ENCODE measurements at regions of chr3 and their contacts with region 1.

Region 1: GRCh38 chr3:196842567-196843434 is 24.9 kb upstream of the SENP5 start:
- DNase-seq: no peak
- H3K4me3 ChIP-seq: no peak overlapping the region
- H3K27ac ChIP-seq: no peak overlapping the region
- H3K4me1 ChIP-seq: no peaks in the 10 kb centered on the region
- H3K27me3 ChIP-seq: no peaks in the 10 kb centered on the region
- CTCF ChIP-seq: no peak
- POLR2A ChIP-seq: no peak

Region 2: DNA sequence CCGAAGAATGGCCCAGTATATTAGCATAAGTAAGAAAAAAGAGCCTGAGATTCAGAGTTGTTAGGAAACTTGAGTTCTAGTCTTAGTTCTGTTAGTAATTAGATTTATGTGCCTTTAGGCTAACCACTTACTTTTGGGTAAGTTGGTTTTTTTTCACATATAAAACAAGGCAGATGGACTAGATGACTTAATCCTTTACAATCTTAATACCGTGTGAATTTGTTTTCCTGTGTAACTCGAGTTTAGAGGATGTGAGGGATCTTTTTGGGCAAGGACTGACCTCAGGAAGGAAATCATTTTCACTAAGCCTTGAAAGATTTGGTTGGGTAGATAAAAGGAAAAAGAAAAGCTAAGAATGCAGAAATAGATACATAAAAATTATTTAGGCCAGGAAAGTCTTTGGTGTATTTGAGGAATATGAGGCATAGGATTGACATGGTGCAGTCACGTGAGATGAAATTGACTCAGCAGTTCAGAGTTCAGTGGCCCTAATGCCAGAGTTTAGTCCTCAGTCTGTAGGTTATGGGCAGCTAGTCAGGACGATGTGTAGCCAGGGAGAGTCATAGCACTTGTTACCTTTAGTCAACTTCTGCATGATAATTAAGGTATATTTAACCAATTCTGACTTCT is 68.5 kb before region 1 on chr3:
- intact Hi-C with region 1: no loop called
- DNase-seq: no peak
- H3K4me3 ChIP-seq: no peak overlapping the region
- H3K27ac ChIP-seq: no peak overlapping the region
- H3K4me1 ChIP-seq: peaks cover 0 to 3% of the 10 kb centered on the region in 2 donors
- H3K27me3 ChIP-seq: no peaks in the 10 kb centered on the region
- CTCF ChIP-seq: no peak
- POLR2A ChIP-seq: no peak

Region 3: DNA sequence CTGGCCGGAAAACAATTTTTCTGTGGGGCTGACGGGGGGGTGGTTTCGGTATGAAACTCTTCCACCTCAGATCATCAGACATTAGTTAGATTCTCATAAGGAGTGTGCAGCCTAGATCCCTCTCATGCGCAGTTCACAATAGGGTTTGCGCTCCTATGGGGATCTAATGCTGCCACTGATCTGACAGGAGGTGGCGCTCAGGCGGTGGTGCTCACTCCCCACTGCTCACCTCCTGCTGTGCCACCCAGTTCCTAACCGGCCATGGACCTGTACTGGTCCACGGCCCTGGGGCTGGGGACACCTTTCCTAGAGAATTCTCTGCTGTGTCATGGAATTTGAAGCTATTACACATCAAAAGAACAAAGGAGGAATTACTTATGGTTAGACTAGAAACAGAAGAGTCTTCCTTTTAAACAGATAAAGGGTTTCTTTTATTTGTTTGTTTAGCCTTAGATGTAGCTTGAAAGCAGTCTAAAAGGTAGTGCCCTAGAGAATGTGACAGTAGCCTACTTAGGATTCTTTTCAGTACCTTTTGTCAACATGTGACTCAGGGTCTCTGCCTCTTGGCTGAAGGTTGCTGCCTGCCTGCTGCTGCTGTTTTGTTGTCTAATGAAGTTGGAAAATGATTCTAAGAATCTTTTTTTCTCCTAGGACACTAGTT is 52.9 kb before region 1 on chr3:
- intact Hi-C with region 1: no loop called
- DNase-seq: no peak
- H3K4me3 ChIP-seq: no peak overlapping the region
- H3K27ac ChIP-seq: no peak overlapping the region
- H3K4me1 ChIP-seq: no peaks in the 10 kb centered on the region
- H3K27me3 ChIP-seq: no peaks in the 10 kb centered on the region
- CTCF ChIP-seq: no peak
- POLR2A ChIP-seq: no peak

Region 4: GRCh38 chr3:196932600-196932999 is 89.8 kb after region 1 on chr3:
- intact Hi-C with region 1: no loop called
- DNase-seq: no peak
- H3K4me3 ChIP-seq: no peak overlapping the region
- H3K27ac ChIP-seq: no peak overlapping the region
- H3K4me1 ChIP-seq: no peaks in the 10 kb centered on the region
- H3K27me3 ChIP-seq: no peaks in the 10 kb centered on the region
- CTCF ChIP-seq: no peak
- POLR2A ChIP-seq: no peak

Region 5: DNA sequence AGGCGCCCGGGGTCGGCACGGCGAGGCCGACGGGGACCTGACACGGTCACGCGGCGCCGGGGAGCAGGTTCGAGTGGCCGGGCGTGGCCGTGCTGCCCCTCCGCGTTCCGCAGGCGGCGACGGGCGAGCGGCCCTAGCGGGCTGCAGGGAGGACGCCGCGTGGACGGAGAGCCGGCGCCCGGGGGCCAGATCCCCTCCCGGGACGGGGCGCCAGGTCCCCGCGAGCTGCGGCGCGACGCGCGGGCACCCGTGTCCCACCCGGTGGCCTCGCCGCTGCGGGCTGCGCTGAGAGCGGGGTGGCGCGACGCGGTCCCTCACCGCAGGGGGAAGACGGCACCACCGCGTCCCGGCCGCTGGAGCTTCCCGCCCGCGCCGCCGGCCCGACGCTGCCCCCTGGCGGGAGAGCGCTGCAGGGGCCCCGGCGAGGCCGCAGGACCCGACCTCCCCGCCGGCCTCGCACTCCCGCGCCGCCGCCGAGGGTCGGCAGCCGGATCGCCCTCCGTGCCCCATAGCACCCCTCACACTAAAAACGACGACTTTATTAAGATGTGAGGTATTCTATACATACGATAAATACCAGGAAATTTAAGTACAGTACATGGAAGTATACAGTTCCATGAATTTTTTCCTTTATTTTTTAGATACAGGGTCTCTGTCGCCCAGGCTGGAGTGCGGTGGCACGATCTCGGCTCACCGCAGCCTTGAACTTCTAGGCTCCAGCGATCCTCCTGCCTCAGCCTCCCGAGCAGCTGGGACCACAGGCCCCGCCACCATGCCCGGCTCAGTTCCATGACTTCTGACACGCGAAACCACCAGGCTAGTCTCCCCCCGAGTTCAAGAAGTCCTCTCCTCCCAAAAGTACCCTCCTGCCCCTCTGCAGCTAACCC is 127.1 kb after region 1 on chr3:
- intact Hi-C with region 1: loop called (anchors 10 kb)
- DNase-seq: peak in 1 of 2 donors; percentile 61
- H3K4me3 ChIP-seq: peak overlapping the region; percentile 49 to 53
- H3K27ac ChIP-seq: peak overlapping the region; percentile 11 to 67
- H3K4me1 ChIP-seq: peaks cover 0 to 3% of the 10 kb centered on the region in 2 donors
- H3K27me3 ChIP-seq: no peaks in the 10 kb centered on the region
- CTCF ChIP-seq: peak; percentile 56 to 94 (median 93)
- POLR2A ChIP-seq: peak in 1 of 2 donors; percentile 37